Activated naive CD4-positive, alpha-beta T cell treated with anti-CD3 and anti-CD28 coated beads, Interleukin-2, amount 10 ng/mL, durations not matched to agents 7 days and 5 days (primary cell): ENCODE measurements at regions of chr17 and their contacts with region 1.

Region 1: DNA sequence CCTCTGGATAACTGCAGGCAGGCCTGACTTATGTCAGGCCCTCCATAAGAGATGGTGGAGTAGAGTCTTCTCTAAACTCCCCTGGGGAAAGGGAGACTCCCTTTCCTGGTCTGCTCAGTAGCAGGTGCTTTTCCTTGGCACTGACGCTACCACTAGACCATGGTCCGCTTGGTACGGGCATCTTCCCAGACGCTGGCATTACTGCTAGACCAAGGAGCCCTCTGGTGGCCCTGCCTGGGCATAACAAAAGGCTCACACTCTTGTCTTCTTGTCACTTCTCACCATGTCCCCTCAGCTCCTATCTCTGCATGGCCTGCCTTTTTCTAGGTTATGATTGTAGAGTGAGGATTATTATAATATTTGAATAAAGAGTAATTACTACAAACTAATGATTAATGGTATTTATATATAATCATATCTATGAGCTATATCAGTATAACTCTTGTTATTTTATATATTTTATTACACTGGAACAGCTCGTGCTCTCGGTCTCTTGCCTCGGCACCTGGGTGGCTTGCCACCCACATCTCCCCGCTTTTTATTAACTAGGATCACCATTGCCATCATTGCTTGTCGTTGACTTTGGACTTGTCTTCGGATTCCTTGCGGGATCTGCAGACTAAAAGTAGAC is 59.8 kb upstream of the ARL4D start:
- DNase-seq: peak; percentile 78
- H3K4me3 Mint-ChIP-seq: no peak overlapping the region
- H3K27ac Mint-ChIP-seq: no peak overlapping the region
- H3K4me1 Mint-ChIP-seq: peaks cover 2% of the 10 kb centered on the region
- H3K27me3 Mint-ChIP-seq: peaks cover 3% of the 10 kb centered on the region

Region 2: DNA sequence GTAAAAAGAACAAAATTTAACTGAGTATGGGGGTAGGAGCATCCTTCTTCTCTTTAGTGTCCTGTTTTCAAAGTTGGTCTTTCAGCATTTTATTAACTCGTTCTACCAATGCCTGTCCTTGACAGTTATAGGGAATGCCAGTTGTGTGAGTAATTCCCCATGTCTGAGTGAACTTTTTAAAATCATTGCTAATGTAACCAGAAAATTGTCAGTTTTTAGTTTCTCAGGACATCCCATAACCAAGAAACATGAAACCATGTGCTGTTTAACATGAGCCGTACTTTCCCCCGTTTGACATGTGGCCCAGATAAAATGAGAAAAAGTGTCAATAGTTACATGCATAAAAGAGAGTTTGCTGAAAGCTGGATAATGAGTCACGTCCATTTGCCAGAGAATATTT is 11.6 kb before region 1 on chr17:
- CTCF ChIA-PET with region 1: interaction called, 11 read pairs
- DNase-seq: no peak
- H3K4me3 Mint-ChIP-seq: no peak overlapping the region
- H3K27ac Mint-ChIP-seq: no peak overlapping the region
- H3K4me1 Mint-ChIP-seq: no peaks in the 10 kb centered on the region
- H3K27me3 Mint-ChIP-seq: peaks cover 17% of the 10 kb centered on the region